Sigmoid colon (tissue), 7 donors: ENCODE measurements at regions of chr20 and their contacts with region 1.

Region 1: GRCh38 chr20:51447097-51447771 is 95.3 kb downstream of the NFATC2 start:
- DNase-seq: peak; percentile 92
- H3K4me3 ChIP-seq: no peak overlapping the region
- H3K27ac ChIP-seq: peak overlapping the region; percentile 47 to 65 (median 63)
- H3K4me1 ChIP-seq: peaks cover 0 to 65% (median 54%) of the 10 kb centered on the region in 4 donors
- H3K27me3 ChIP-seq: no peaks in the 10 kb centered on the region
- CTCF ChIP-seq: no peak
- EP300 ChIP-seq: peak in 1 of 4 donors; percentile 22
- POLR2A ChIP-seq: no peak

Region 2: DNA sequence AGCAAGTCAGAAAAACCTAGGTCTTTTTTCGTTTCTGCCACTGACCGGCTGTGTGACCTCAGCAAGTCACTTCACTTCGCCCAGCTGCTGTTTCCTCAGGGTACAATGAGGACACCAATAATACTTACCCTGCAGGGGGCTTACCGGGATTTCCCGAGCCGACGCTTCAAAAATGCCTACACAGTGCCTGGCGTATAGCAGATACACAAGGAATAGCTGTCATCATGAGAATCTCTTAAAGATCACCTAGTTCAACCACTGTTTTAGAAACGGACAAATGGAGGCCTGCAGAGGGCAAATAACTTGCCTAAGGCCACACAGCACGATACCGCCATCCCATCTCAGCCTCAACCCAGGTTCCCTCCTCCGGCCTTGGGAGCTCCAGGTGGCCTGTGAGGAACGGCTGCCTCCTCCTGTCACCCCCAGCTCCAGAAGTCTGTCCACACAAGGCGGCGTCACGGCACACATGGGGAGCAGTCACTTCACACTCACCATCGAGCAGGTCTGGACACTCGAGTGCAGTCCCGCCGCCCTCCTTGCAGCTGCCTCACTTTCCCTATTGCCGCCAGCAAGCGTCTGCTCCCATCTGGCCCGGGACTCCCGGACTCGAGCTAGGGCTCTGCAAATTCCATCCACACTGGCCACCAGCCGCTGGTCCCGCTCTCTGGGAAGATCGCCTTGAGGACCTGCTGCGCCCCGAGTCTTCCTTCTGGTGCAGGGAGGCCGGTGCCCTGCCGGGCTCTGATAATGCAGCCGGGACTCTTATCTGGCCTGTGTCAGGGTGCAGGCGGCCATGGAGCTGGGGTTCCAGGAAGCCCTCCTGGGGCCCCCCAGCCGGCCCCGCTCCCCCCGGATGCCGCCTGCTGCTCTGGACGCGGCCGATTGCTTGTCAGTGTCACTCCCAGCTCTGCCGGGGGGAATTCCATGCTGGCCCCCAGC is 756.3 kb before region 1 on chr20 and contains the start of gene RIPOR3:
- intact Hi-C with region 1: no loop called
- DNase-seq: peak; percentile 78
- H3K4me3 ChIP-seq: peak within 1 kb of the TSS; percentile 36 to 52 (median 46)
- H3K27ac ChIP-seq: peak within 1 kb of the TSS; percentile 63 to 77 (median 68)
- H3K4me1 ChIP-seq: peaks cover 0 to 30% (median 15%) of the 10 kb centered on the region in 4 donors
- H3K27me3 ChIP-seq: peaks cover 0 to 22% (median 0%) of the 10 kb centered on the region in 3 donors
- CTCF ChIP-seq: no peak
- EP300 ChIP-seq: no peak
- POLR2A ChIP-seq: no peak
- total RNA-seq, gene RIPOR3: 9.4 to 28.0 (median 15.1) TPM

Region 3: DNA sequence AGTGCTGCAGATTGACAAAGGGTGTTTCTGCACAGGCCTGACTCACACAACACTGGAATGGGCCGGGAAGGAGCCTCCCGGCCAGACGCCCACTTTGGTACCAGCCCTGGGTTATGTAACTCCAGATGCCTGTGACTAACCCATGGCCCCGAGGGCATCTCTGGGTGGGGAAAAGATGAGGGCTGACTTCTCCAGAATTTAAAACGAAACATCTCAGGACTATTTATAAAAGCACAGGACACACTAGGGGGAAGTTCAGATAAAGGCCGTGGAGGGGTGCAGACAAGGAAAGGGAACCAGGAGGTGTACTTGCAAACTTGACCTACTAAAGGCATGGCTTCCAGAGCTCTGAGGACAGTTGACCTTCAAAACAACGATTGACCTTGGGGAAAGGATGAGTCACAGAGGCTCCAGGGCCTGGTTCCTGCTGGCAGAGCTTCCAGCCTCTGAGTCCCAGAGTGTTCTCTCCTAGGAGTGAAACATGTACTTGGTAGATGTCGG is 101.6 kb before region 1 on chr20:
- intact Hi-C with region 1: no loop called
- DNase-seq: peak; percentile 58
- H3K4me3 ChIP-seq: no peak overlapping the region
- H3K27ac ChIP-seq: no peak overlapping the region
- H3K4me1 ChIP-seq: no peaks in the 10 kb centered on the region
- H3K27me3 ChIP-seq: peaks cover 0 to 7% (median 0%) of the 10 kb centered on the region in 3 donors
- CTCF ChIP-seq: no peak
- EP300 ChIP-seq: no peak
- POLR2A ChIP-seq: no peak

Region 4: GRCh38 chr20:51562332-51563155 is 115.3 kb after region 1 on chr20:
- intact Hi-C with region 1: loop called (anchors 2 kb)
- DNase-seq: peak; percentile 94
- H3K4me3 ChIP-seq: peak overlapping the region; percentile 20 to 57 (median 49)
- H3K27ac ChIP-seq: peak overlapping the region; percentile 83 to 92 (median 86)
- H3K4me1 ChIP-seq: peaks cover 0 to 57% (median 49%) of the 10 kb centered on the region in 4 donors
- H3K27me3 ChIP-seq: no peaks in the 10 kb centered on the region
- CTCF ChIP-seq: no peak
- EP300 ChIP-seq: no peak
- POLR2A ChIP-seq: peak; percentile 17 to 33